Gastrocnemius medialis (tissue), 4 donors: ENCODE measurements at regions of chr5 and their contacts with region 1.

Region 1: GRCh38 chr5:38968665-38969064 is 105.5 kb downstream of the RICTOR start:
- DNase-seq: no peak
- ATAC-seq: no peak
- H3K4me3 ChIP-seq: no peak overlapping the region
- H3K27ac ChIP-seq: no peak overlapping the region
- H3K4me1 ChIP-seq: no peaks in the 10 kb centered on the region
- H3K27me3 ChIP-seq: no peaks in the 10 kb centered on the region
- CTCF ChIP-seq: no peak
- POLR2A ChIP-seq: no peak

Region 2: GRCh38 chr5:37043688-37044087 is 1925.0 kb before region 1 on chr5:
- in situ Hi-C with region 1: loop called in 2 of 4 experiments (anchors 25 kb)
- intact Hi-C with region 1: no loop called
- DNase-seq: no peak
- ATAC-seq: no peak
- H3K4me3 ChIP-seq: no peak overlapping the region
- H3K27ac ChIP-seq: no peak overlapping the region
- H3K4me1 ChIP-seq: no peaks in the 10 kb centered on the region
- H3K27me3 ChIP-seq: no peaks in the 10 kb centered on the region
- CTCF ChIP-seq: no peak
- POLR2A ChIP-seq: no peak

Region 3: GRCh38 chr5:37197340-37198050 is 1771.2 kb before region 1 on chr5:
- in situ Hi-C with region 1: loop called in 1 of 4 experiments (anchors 25 kb)
- intact Hi-C with region 1: no loop called
- DNase-seq: no peak
- ATAC-seq: no peak
- H3K4me3 ChIP-seq: no peak overlapping the region
- H3K27ac ChIP-seq: peak overlapping the region in 1 of 4 donors; percentile 3
- H3K4me1 ChIP-seq: no peaks in the 10 kb centered on the region
- H3K27me3 ChIP-seq: no peaks in the 10 kb centered on the region
- CTCF ChIP-seq: no peak
- POLR2A ChIP-seq: no peak